Left ventricle myocardium superior (tissue), 1 donor: ENCODE measurements at regions of chr3 and their contacts with region 1.

Region 1: GRCh38 chr3:111173328-111173900 is 101.8 kb downstream of the NECTIN3 start:
- DNase-seq: no peak
- ATAC-seq: no peak

Region 2: GRCh38 chr3:111112913-111113312 is 60.5 kb before region 1 on chr3:
- intact Hi-C with region 1: loop called (anchors 2 kb)
- DNase-seq: no peak
- ATAC-seq: no peak

Region 3: GRCh38 chr3:111311709-111312235 is 138.4 kb after region 1 on chr3:
- intact Hi-C with region 1: no loop called
- DNase-seq: no peak
- ATAC-seq: no peak

Region 4: GRCh38 chr3:111539351-111540331 is 366.2 kb after region 1 on chr3:
- intact Hi-C with region 1: no loop called
- DNase-seq: peak; percentile 37
- ATAC-seq: peak; percentile 35

Region 5: DNA sequence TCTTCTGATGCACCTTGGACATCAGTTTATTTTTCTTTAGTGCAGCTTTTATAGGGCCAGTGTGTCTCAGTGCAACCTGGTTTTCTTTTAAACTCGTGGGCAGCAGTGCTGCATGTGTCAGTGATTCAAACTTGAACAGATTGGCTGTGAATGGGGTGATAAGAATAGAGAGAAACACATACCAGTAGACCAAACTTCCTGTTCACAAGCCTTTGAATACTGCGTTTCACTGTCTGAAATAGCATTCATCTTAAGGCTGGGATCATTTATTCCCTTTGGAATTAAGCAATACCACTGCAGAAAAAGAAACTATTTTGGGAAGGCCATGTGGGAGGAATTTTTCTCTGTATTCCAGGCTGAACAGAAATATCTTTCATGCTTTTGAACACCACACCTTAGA is 737.4 kb after region 1 on chr3:
- intact Hi-C with region 1: no loop called
- DNase-seq: no peak
- ATAC-seq: peak; percentile 80

Region 6: DNA sequence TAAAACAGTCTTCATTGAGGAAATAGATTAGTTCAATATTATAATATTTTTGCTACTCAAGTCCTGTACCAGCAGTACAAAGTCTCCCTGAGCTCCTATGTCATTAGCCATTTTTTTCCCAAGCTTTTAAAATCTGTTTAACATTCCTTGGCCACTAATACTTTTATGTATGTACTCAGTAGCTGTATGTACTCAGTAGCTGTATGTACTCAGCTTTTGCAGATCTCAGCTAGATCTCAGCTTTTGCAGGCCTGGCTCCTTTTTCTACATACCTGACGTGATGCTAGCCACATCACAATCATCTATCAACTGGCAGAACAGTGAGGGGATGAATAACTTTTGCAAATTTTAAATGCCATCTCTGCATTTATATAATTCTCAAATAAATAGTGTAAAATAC is 1106.9 kb after region 1 on chr3:
- intact Hi-C with region 1: no loop called
- DNase-seq: no peak
- ATAC-seq: no peak